CD4-positive, alpha-beta memory T cell (primary cell): ENCODE measurements at regions of chr19 and their contacts with region 1.

Region 1: DNA sequence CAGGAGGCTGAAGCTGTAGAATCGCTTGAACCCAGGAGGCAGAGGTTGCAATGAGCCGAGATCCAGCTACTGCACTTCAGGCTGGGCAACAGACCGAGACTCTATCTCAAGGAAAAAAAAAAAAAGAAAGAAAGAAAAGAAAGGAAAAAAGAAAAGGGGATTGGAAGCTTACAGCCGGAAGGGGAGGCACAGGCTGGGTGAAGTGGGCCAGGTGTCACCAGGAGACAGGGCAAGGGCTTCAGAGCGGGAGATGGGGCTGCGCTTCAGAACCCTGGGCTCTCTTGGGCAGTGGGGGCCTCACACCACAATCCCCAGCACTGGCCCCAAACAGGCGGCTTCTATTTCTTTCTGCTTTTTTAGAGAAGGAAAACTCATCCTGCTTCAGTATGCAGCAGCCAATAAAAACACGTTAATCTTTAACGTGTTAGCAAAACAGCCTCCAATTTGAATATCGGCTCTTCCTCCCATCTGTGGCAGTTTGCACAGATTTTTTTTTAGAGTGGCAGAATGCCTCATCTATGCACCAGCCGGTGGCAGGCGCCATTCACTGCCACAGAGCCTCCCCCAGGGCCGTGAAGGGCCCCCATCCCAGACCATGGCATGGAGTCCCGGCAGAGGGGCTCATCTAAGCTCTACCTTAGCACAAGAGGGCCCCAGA is 46.6 kb upstream of the C19orf12 start:
- DNase-seq: no peak
- H3K4me3 ChIP-seq: no peak overlapping the region
- H3K4me3 Mint-ChIP-seq: no peak overlapping the region
- H3K27ac ChIP-seq: no peak overlapping the region
- H3K27ac Mint-ChIP-seq: no peak overlapping the region
- H3K4me1 ChIP-seq: peaks cover 8% of the 10 kb centered on the region
- H3K4me1 Mint-ChIP-seq: no peaks in the 10 kb centered on the region
- H3K27me3 ChIP-seq: no peaks in the 10 kb centered on the region
- H3K27me3 Mint-ChIP-seq: peaks cover 0 to 3% of the 10 kb centered on the region in 2 donors

Region 2: GRCh38 chr19:29735800-29736199 is 25.9 kb before region 1 on chr19:
- CTCF ChIA-PET with region 1: interaction called, 46 read pairs
- POLR2A ChIA-PET with region 1: no interaction called
- intact Hi-C with region 1: loop called (anchors 1 kb)
- DNase-seq: no peak
- H3K4me3 ChIP-seq: no peak overlapping the region
- H3K4me3 Mint-ChIP-seq: no peak overlapping the region
- H3K27ac ChIP-seq: no peak overlapping the region
- H3K27ac Mint-ChIP-seq: no peak overlapping the region
- H3K4me1 ChIP-seq: no peaks in the 10 kb centered on the region
- H3K4me1 Mint-ChIP-seq: no peaks in the 10 kb centered on the region
- H3K27me3 ChIP-seq: no peaks in the 10 kb centered on the region
- H3K27me3 Mint-ChIP-seq: peaks cover 3 to 12% of the 10 kb centered on the region in 2 donors

Region 3: GRCh38 chr19:29771708-29772414 is 10.2 kb after region 1 on chr19:
- CTCF ChIA-PET with region 1: interaction called, 21 read pairs
- POLR2A ChIA-PET with region 1: no interaction called
- intact Hi-C with region 1: no loop called
- DNase-seq: peak in 3 of 5 donors; percentile 10 to 20 (median 13)
- H3K4me3 ChIP-seq: no peak overlapping the region
- H3K4me3 Mint-ChIP-seq: no peak overlapping the region
- H3K27ac ChIP-seq: no peak overlapping the region
- H3K27ac Mint-ChIP-seq: no peak overlapping the region
- H3K4me1 ChIP-seq: no peaks in the 10 kb centered on the region
- H3K4me1 Mint-ChIP-seq: no peaks in the 10 kb centered on the region
- H3K27me3 ChIP-seq: no peaks in the 10 kb centered on the region
- H3K27me3 Mint-ChIP-seq: no peaks in the 10 kb centered on the region

Region 4: DNA sequence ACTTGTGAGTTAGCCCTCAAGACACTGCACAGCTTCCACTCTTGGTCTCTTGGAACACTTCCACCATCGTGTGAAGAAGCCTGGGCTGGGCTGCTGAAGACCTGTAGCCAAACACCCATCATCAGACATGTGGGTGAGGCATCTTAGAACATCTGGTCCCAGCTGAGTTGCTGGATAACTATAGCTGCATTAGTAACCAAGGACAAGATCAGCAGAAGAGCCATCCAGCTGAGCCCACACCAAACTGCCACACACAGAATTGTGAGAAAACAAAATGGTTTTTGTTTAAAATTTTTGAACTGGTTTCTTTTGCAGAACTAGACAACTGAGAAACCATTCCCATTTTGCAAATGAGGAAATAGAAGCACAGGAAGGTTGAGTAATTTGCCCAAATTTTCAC is 106.3 kb after region 1 on chr19:
- CTCF ChIA-PET with region 1: interaction called, 132 read pairs
- POLR2A ChIA-PET with region 1: no interaction called
- intact Hi-C with region 1: loop called (anchors 1 kb)
- DNase-seq: no peak
- H3K4me3 ChIP-seq: no peak overlapping the region
- H3K4me3 Mint-ChIP-seq: no peak overlapping the region
- H3K27ac ChIP-seq: no peak overlapping the region
- H3K27ac Mint-ChIP-seq: no peak overlapping the region
- H3K4me1 ChIP-seq: peaks cover 6% of the 10 kb centered on the region
- H3K4me1 Mint-ChIP-seq: peaks cover 0 to 16% (median 4%) of the 10 kb centered on the region in 4 donors
- H3K27me3 ChIP-seq: peaks cover 6% of the 10 kb centered on the region
- H3K27me3 Mint-ChIP-seq: peaks cover 2 to 21% of the 10 kb centered on the region in 2 donors